ENCODE measurements at regions of chr15 and their contacts with region 1.

Region 1: GRCh38 chr15:49155110-49155833 is at the start of gene COPS2:
- DNase-seq: peak; percentile 94
- H3K4me3 Mint-ChIP-seq: peak within 1 kb of the TSS; percentile 100
- H3K27ac Mint-ChIP-seq: peak within 1 kb of the TSS; percentile 99
- H3K4me1 Mint-ChIP-seq: peaks cover 44% of the 10 kb centered on the region
- H3K27me3 Mint-ChIP-seq: no peaks in the 10 kb centered on the region
- total RNA-seq, gene COPS2: 85.1 and 94.7 TPM in 2 replicates

Region 2: DNA sequence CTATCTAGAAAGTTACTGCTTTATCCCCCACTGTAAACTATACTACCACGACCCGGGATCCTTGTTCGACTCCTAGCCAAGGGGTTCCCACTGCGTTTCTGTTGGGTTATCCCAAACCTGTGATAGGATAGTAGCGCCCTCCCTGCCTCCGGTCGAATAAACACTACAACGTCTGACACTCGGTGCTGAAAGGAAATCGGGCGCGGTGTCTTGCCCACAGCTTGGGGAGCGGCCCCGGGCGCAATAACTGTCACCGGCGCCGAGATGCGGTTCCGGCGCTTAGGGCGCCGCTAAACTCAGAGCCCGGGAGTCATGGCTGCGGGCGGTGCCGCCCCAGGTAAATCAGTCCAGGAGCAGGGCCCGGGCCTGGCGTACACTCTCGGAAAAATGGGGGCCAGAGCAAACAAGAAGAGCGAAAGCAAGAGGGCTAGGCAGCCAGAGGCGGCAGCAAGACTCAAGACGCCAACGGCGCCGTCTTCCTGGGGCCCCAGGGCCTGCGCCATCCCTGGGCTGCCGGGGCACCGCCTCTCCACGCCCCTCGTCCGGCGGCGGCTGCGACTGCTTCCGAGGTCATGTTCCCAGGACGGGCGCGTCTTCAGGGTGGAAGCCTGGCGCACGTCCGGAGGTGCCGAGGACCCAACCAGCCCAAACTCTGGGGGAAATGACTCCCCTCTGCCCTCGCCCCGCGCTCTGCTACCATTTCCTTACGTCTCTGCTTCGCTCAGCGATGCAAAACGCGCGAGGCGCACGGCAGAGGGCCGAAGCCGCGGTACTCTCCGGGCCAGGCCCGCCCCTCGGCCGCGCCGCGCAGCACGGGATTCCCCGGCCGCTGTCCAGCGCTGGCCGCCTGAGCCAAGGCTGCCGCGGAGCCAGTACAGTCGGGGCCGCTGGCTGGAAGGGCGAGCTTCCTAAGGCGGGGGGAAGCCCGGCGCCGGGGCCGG is 824.1 kb before region 1 on chr15 and contains the start of gene DUT:
- intact Hi-C with region 1: loop called (anchors 10 kb)
- DNase-seq: peak; percentile 82
- H3K4me3 Mint-ChIP-seq: peak within 1 kb of the TSS; percentile 99
- H3K27ac Mint-ChIP-seq: peak within 1 kb of the TSS; percentile 99
- H3K4me1 Mint-ChIP-seq: peaks cover 38% of the 10 kb centered on the region
- H3K27me3 Mint-ChIP-seq: no peaks in the 10 kb centered on the region
- total RNA-seq, gene DUT: 204 and 212 TPM in 2 replicates

Region 3: DNA sequence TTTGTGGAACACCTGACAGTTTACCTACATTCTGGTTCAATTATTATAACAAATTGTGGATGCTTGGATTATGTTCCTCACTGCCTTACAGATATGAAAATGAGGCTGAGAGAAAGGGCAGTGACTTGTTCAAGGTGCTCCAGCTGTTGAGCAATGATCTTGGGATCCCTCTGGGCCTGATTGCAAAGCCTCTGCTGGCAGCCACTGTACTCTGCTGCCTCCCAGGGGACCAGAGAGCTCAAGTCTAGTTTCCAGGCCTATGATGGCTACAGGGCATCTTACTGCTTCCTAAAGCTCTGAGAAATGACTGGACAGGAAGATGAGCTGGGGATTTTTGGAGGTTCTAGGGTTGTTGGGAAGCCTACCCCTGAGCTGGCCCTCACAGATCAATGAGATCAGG is 189.3 kb before region 1 on chr15:
- intact Hi-C with region 1: loop called (anchors 2 kb)
- DNase-seq: no peak
- H3K4me3 Mint-ChIP-seq: peak overlapping the region; percentile 16
- H3K27ac Mint-ChIP-seq: peak overlapping the region; percentile 97
- H3K4me1 Mint-ChIP-seq: peaks cover 72% of the 10 kb centered on the region
- H3K27me3 Mint-ChIP-seq: no peaks in the 10 kb centered on the region

Region 4: DNA sequence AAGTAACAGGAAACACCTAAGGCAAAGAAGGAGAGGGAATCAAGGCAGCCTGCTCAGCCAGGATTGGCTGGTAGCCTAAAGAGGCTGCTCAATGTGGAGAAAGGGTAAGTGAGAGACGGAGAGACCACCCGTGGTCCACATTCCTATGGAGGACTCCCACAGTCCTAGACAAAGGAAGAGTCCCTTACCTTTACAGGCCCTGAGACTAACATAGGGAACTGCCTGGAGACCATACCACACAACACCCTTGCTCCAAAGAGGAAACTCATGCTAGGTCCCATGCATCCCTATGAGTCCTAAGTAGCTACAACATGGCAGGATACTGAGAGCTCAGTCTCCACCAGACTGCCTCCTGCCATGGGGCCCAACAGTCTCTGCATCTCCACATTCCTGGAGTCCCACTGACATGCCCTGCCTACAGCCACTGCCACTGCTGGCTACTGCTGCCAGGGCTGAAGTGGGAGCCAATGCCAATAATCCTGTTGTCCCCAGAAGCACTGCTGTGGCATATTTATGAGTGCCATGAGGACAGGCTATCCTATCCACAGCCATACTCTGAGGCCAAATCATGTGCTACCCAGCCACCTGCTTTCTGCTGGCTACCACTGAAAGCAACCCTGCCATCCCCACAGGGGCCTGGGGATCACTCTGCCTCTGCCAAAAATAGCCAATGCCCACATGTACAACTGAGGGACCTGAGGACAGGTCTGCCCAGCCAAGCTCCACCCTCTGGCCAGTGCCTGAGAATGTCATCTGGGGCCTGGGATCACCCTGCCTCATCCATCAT is 44.9 kb before region 1 on chr15:
- intact Hi-C with region 1: no loop called
- DNase-seq: no peak
- H3K4me3 Mint-ChIP-seq: no peak overlapping the region
- H3K27ac Mint-ChIP-seq: no peak overlapping the region
- H3K4me1 Mint-ChIP-seq: peaks cover 2% of the 10 kb centered on the region
- H3K27me3 Mint-ChIP-seq: no peaks in the 10 kb centered on the region

Region 5: GRCh38 chr15:49169880-49170597 is 14.8 kb after region 1 on chr15 and contains the start of gene GALK2:
- intact Hi-C with region 1: loop called (anchors 1 kb)
- DNase-seq: peak; percentile 82
- H3K4me3 Mint-ChIP-seq: peak within 1 kb of the TSS; percentile 96
- H3K27ac Mint-ChIP-seq: peak within 1 kb of the TSS; percentile 94
- H3K4me1 Mint-ChIP-seq: peaks cover 26% of the 10 kb centered on the region
- H3K27me3 Mint-ChIP-seq: no peaks in the 10 kb centered on the region
- total RNA-seq, gene GALK2: 29.8 and 33.3 TPM in 2 replicates

Region 6: DNA sequence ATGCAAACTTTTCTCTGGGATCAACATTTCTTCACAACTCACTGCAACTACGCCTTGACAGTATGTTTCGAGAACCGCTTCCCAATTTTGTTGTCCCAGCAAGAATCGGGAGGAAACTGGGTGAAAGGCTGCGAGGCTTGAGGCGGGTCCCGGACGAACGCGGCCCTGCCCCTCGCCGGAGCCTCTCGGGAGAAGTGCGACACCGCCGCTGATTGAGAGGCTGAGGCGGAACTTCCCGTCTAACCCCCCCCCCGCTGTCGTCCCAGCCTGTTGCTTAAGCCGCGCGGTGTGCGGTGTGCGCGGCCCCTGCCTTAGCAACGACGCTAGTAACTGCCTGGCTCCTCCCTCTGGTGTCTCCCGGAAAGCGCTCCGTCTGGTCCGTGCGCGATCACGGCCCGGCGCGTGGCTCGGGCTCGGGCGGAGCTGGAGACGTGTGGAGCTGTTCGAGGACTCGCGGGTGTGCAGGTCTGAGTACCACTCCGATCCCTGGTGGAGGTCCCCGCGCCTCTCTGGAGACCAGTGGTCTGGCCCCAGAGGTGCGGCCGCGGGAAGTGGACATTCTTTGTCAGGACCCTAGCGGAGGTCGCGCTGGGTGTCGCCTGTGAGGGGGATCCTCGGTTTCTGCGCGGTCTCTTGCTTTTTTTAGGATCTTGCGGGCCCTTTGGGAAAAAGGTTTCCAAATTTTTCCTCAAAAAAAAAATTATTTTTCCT is 465.5 kb after region 1 on chr15 and contains the starts of genes DTWD1 and FAM227B:
- intact Hi-C with region 1: loop called (anchors 2 kb)
- DNase-seq: peak; percentile 93
- H3K4me3 Mint-ChIP-seq: peak within 1 kb of the TSS; percentile 90
- H3K27ac Mint-ChIP-seq: peak within 1 kb of the TSS; percentile 91
- H3K4me1 Mint-ChIP-seq: peaks cover 39% of the 10 kb centered on the region
- H3K27me3 Mint-ChIP-seq: no peaks in the 10 kb centered on the region
- total RNA-seq, gene DTWD1: 22.0 and 24.0 TPM in 2 replicates
- total RNA-seq, gene FAM227B: 2.7 and 3.1 TPM in 2 replicates